Activated CD8-positive, alpha-beta memory T cell treated with anti-CD3 and anti-CD28 coated beads, Interleukin-2, amount 10 ng/mL, durations not matched to agents 7 days and 5 days (primary cell): ENCODE measurements at regions of chr21 and their contacts with region 1.

Region 1: GRCh38 chr21:42684109-42684916 is 30.9 kb downstream of the PDE9A start:
- DNase-seq: peak; percentile 76
- ATAC-seq: peak; percentile 67
- H3K4me3 Mint-ChIP-seq: peak overlapping the region; percentile 68
- H3K27ac Mint-ChIP-seq: peak overlapping the region; percentile 98
- H3K4me1 Mint-ChIP-seq: peaks cover 50% of the 10 kb centered on the region
- H3K27me3 Mint-ChIP-seq: peaks cover 8% of the 10 kb centered on the region

Region 2: DNA sequence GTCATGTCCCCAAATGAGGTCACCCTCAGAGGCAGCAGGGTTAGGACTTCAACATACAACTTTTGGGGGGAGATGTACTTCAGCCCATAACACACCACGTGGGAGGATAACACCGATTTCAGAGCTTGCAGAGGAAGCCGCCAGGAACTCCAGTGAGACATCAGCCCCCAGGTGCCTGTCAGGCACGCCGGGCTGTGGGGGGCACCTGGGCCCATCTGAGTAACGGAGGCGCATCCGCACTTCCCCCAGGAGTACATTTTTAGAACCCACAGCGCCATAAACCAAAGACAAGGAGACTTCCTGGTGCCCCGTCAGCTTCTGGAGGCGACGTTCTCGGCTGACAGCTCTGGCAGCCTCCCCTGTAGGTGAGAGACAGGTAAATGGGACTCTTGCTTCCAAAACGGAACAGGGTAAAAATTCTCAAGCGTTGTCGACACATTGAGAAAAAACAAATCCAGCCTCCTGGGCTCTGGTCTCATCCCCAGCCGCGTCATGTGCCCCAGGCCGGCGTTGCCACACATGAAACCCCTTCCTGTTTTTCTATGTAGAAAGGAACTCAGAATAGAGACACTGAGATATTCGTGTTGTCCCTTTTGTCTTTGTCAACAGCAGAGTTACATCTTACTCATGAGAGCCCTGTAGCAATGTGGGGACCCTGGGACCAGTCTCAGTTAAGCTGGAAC is 62.4 kb after region 1 on chr21:
- CTCF ChIA-PET with region 1: interaction called, 12 read pairs
- DNase-seq: peak; percentile 61
- ATAC-seq: peak; percentile 74
- H3K4me3 Mint-ChIP-seq: peak overlapping the region; percentile 46
- H3K27ac Mint-ChIP-seq: peak overlapping the region; percentile 95
- H3K4me1 Mint-ChIP-seq: peaks cover 21% of the 10 kb centered on the region
- H3K27me3 Mint-ChIP-seq: peaks cover 5% of the 10 kb centered on the region